Esophagus squamous epithelium (tissue), 5 donors: ENCODE measurements at regions of chr13 and their contacts with region 1.

Region 1: DNA sequence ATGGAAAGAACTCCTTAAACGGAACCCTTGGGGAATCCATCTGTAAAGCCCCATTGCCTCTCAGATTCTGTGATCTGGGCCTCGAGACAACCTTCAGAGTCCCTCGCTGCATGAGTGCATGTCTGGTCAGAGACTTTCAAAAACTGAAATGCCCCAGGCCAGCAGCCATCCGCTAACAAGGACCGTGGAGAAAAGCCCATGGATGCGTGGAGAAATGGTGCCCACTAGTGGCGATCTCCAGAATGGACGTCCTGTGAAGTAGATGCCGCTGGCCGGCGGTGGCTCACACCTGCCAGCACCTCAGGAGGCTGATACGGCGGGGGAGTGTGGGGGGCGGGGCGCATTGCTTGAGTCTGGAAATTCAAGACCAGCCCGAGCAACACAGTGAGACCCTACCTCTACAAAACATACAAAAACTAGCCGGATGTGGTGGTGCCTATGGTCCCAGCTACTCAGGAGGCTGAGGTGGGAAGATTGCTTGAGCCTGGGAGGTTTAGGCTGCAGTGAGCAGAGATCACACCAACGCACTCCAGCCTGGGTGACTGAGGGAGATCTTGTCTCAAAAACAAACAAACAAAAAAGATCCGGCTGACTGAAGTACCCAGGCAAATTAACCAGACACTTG is 7.9 kb upstream of the CDC16 start:
- DNase-seq: no peak
- H3K4me3 ChIP-seq: no peak overlapping the region
- H3K27ac ChIP-seq: no peak overlapping the region
- H3K4me1 ChIP-seq: peaks cover 0 to 8% (median 4%) of the 10 kb centered on the region in 3 donors
- H3K27me3 ChIP-seq: peaks cover 0 to 41% (median 0%) of the 10 kb centered on the region in 4 donors
- CTCF ChIP-seq: peak; percentile 89 to 97 (median 95)
- POLR2A ChIP-seq: no peak

Region 2: GRCh38 chr13:113953561-113953960 is 273.2 kb before region 1 on chr13:
- intact Hi-C with region 1: loop called (anchors 2 kb)
- DNase-seq: no peak
- H3K4me3 ChIP-seq: no peak overlapping the region
- H3K27ac ChIP-seq: no peak overlapping the region
- H3K4me1 ChIP-seq: peaks cover 6 to 14% (median 12%) of the 10 kb centered on the region in 3 donors
- H3K27me3 ChIP-seq: peaks cover 0 to 6% (median 0%) of the 10 kb centered on the region in 4 donors
- CTCF ChIP-seq: no peak
- POLR2A ChIP-seq: no peak